Cardiac septum (tissue), 1 donor: ENCODE measurements at regions of chr4 and their contacts with region 1.

Region 1: GRCh38 chr4:143513306-143514168 is at the start of gene SMARCA5:
- DNase-seq: peak; percentile 98
- total RNA-seq, gene SMARCA5: 37.7 TPM

Region 2: GRCh38 chr4:143375313-143376073 is 138.0 kb before region 1 on chr4:
- intact Hi-C with region 1: loop called (anchors 5 kb)
- DNase-seq: no peak

Region 3: GRCh38 chr4:143411527-143412480 is 101.7 kb before region 1 on chr4:
- intact Hi-C with region 1: no loop called
- DNase-seq: no peak

Region 4: GRCh38 chr4:143599827-143600226 is 86.3 kb after region 1 on chr4:
- intact Hi-C with region 1: no loop called
- DNase-seq: no peak